IMR-90 (cell line): ENCODE measurements at regions of chr1 and their contacts with region 1.

Region 1: DNA sequence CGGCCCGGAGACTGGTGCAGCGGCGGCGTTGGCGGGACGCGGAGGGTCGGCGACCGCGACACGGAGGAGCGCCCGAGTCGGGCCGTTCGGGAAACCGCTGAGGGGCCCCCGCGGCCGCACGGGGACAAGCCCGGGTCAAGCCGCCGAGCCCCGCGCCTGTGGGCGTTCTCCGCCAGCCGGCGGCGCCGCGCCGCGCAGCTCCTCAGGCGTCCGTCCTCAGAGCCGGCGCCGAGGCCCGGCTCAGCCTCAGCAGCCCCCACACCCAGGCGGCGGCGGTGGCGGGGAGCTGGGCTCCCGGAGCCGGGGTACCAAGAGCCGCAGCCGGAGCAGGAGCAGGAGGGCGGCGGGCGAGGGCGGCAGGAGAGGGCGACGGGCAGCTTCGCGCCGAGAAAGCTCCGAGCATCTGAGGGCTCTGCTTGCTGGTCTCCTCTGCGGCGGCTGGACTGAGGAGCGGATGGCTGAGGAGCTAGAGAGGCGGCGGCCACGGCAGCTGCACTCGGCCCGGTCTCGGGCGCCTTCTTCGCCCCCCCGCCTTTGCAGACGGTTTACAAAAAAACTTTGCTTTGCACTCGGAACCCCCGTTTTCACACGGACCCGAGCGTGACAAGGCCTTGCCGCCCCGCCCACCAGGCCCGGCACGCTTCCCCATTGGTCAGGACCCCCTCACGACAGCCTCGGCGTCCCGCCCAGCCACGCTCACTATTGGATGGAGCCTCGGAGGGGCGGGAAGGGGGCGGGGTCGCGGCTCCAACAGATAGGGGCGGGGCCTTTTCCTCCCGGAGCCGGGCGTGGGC is at the start of gene SLC30A1:
- DNase-seq: peak; percentile 97
- ATAC-seq: peak; percentile 93
- H3K4me3 ChIP-seq: peak within 1 kb of the TSS; percentile 96
- H3K27ac ChIP-seq: peak within 1 kb of the TSS; percentile 91
- H3K4me1 ChIP-seq: peaks cover 13% of the 10 kb centered on the region
- H3K27me3 ChIP-seq: no peaks in the 10 kb centered on the region
- CTCF ChIP-seq: 0 out of 2 replicates have a peak, but pooled peaks have one; percentile 13
- POLR2A ChIP-seq: peak; percentile 74
- RAD21 ChIP-seq: no peak
- total RNA-seq, gene SLC30A1: 8.4 and 17.8 TPM in 2 replicates

Region 2: DNA sequence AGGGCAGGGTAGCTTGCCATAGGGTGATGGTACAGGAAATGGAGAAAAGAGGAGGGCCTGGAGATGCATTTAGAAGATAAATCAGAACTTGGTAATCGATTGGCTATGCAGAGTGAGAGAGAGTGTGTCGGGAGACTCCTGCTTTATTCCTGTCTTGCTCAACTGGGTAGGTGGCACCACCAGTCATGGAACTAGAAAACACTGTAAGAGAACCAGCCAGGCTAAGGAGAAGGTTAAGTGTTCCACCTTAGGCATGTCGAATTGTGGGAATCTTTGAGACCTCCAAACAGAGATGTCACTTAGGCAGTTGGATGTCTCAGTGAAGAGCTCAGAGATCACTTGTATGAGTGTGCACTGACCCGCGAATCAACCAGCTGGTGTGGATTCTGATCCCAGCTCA is 58.2 kb before region 1 on chr1:
- CTCF ChIA-PET with region 1: no interaction called
- POLR2A ChIA-PET with region 1: no interaction called
- dilution Hi-C with region 1: no loop called
- in situ Hi-C with region 1: no loop called
- intact Hi-C with region 1: loop called (anchors 2 kb)
- DNase-seq: no peak
- ATAC-seq: no peak
- H3K4me3 ChIP-seq: no peak overlapping the region
- H3K27ac ChIP-seq: no peak overlapping the region
- H3K4me1 ChIP-seq: peaks cover 2% of the 10 kb centered on the region; the same call in 1 of the 2 replicates
- H3K27me3 ChIP-seq: no peaks in the 10 kb centered on the region
- CTCF ChIP-seq: no peak; the same call in 1 of the 2 replicates
- POLR2A ChIP-seq: no peak
- RAD21 ChIP-seq: no peak

Region 3: DNA sequence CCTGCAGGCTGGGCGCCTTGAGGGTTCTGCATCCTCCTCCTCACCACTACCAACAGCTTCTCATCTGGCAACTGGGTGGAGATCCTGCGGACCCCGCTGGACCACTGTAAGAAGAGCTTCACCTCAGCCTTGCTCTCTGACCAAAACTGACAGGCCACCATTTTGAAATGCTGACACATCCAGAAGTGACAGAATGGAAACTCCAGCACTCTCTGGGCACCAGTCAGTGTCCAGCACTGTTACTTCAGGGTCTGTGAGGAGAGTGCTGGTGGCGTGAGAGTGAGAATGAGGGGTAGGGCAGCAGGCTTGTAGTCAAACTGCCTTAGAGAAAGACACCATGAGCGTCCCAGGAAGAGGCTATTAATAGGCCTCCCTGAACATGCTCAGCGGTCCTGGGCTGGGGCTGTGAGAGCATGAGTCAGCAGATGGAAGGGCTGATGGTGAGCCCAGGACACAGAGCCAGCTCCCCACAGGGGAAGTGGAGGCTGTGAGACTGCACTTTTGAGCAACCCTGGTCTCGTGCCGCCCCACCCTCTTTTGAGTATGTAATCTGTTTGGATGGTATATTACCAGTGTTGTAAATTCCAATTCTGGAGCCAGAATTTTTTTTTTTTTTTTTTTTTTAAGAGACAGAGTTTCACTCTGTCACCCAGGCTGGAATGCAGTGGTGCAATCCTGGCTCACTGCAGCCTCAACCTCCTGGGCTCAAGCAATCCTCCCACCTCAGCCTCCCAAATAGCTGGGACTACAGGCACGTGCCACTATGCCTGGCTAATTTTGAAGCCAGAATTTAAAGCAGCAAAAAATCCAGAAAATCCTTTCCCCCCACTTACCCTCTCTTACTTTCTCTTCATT is 34.5 kb after region 1 on chr1:
- CTCF ChIA-PET with region 1: interaction called, 3 read pairs
- POLR2A ChIA-PET with region 1: no interaction called
- dilution Hi-C with region 1: no loop called
- in situ Hi-C with region 1: no loop called
- intact Hi-C with region 1: loop called (anchors 1 kb)
- DNase-seq: peak; percentile 94
- ATAC-seq: peak; percentile 99
- H3K4me3 ChIP-seq: no peak overlapping the region
- H3K27ac ChIP-seq: peak overlapping the region; percentile 85
- H3K4me1 ChIP-seq: peaks cover 9% of the 10 kb centered on the region
- H3K27me3 ChIP-seq: no peaks in the 10 kb centered on the region
- CTCF ChIP-seq: no peak
- POLR2A ChIP-seq: no peak
- RAD21 ChIP-seq: peak; percentile 8; the same call in 1 of the 2 replicates